ENCODE measurements at regions of chrX and their contacts with region 1.

Region 1: GRCh38 chrX:41441934-41442823 is 5.0 kb upstream of the NYX start:
- H3K4me3 ChIP-seq: peak overlapping the region; percentile 49
- H3K27ac ChIP-seq: no peak overlapping the region; the same call in 1 of the 2 replicates
- H3K4me1 ChIP-seq: peaks cover 9% of the 10 kb centered on the region
- CTCF ChIP-seq: peak; percentile 67; the same call in 1 of the 2 replicates

Region 2: GRCh38 chrX:41429592-41429991 is 12.6 kb before region 1 on chrX:
- CTCF ChIA-PET with region 1: interaction called, 10 read pairs
- POLR2A ChIA-PET with region 1: no interaction called
- H3K4me3 ChIP-seq: no peak overlapping the region
- H3K27ac ChIP-seq: no peak overlapping the region
- H3K4me1 ChIP-seq: no peaks in the 10 kb centered on the region
- CTCF ChIP-seq: no peak

Region 3: DNA sequence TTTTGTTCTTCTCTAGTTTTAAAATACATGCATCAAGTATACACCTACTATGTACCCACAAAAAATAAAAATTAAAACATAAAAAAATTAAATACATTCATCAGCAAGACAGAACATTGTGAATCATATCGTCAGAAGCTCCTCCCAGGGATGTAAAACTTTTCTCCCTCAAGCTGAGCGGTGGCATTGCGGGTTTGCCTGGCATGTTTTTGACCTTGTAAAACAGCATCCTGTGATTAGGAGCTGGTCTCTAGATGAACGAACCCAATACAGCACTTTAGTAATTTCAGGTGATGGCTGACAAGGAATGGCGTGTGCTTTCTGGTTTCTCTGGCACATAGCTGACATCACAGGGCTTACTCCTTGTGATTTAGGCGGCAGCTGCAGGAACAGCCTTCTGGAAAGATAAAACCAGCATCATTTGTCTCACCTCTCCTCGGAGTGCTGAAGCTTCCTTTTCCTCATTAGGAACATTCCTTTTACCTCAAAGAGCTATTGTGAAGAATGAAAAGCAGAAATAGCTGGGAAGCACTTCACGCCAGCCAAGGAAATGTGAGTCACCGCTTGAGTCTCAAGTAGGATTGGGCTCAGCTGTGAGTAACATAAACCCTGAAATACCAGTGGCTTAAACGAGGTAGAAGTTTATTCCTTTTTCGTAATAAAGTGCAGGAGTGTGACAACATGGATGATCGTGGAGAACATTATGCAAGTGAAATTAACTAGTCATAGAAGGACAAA is 49.3 kb after region 1 on chrX:
- CTCF ChIA-PET with region 1: no interaction called
- POLR2A ChIA-PET with region 1: no interaction called
- H3K4me3 ChIP-seq: peak overlapping the region; percentile 8
- H3K27ac ChIP-seq: no peak overlapping the region
- H3K4me1 ChIP-seq: no peaks in the 10 kb centered on the region
- CTCF ChIP-seq: no peak